Mammary epithelial cell (primary cell): ENCODE measurements at regions of chrX and their contacts with region 1.

Region 1: GRCh38 chrX:66200855-66201795 is 37.1 kb downstream of the HEPH start:
- DNase-seq: no peak
- H3K4me3 ChIP-seq: no peak overlapping the region
- H3K27ac ChIP-seq: no peak overlapping the region
- H3K4me1 ChIP-seq: no peaks in the 10 kb centered on the region
- H3K27me3 ChIP-seq: no peaks in the 10 kb centered on the region
- CTCF ChIP-seq: peak; percentile 4 to 39

Region 2: GRCh38 chrX:65948103-65948502 is 253.0 kb before region 1 on chrX:
- CTCF ChIA-PET with region 1: no interaction called
- dilution Hi-C with region 1: no loop called
- in situ Hi-C with region 1: no loop called
- intact Hi-C with region 1: no loop called
- DNase-seq: no peak
- H3K4me3 ChIP-seq: no peak overlapping the region
- H3K27ac ChIP-seq: no peak overlapping the region
- H3K4me1 ChIP-seq: no peaks in the 10 kb centered on the region
- H3K27me3 ChIP-seq: no peaks in the 10 kb centered on the region
- CTCF ChIP-seq: no peak

Region 3: GRCh38 chrX:66384722-66385121 is 183.6 kb after region 1 on chrX:
- CTCF ChIA-PET with region 1: no interaction called
- dilution Hi-C with region 1: no loop called
- in situ Hi-C with region 1: no loop called
- intact Hi-C with region 1: no loop called
- DNase-seq: no peak
- H3K4me3 ChIP-seq: no peak overlapping the region
- H3K27ac ChIP-seq: no peak overlapping the region
- H3K4me1 ChIP-seq: no peaks in the 10 kb centered on the region
- H3K27me3 ChIP-seq: no peaks in the 10 kb centered on the region
- CTCF ChIP-seq: no peak

Region 4: GRCh38 chrX:66408507-66408906 is 207.4 kb after region 1 on chrX:
- CTCF ChIA-PET with region 1: interaction called, 4 read pairs
- dilution Hi-C with region 1: no loop called
- in situ Hi-C with region 1: no loop called
- intact Hi-C with region 1: loop called (anchors 2 kb)
- DNase-seq: peak; percentile 12
- H3K4me3 ChIP-seq: no peak overlapping the region
- H3K27ac ChIP-seq: no peak overlapping the region
- H3K4me1 ChIP-seq: no peaks in the 10 kb centered on the region
- H3K27me3 ChIP-seq: no peaks in the 10 kb centered on the region
- CTCF ChIP-seq: peak in 1 of 2 donors; percentile 29

Region 5: DNA sequence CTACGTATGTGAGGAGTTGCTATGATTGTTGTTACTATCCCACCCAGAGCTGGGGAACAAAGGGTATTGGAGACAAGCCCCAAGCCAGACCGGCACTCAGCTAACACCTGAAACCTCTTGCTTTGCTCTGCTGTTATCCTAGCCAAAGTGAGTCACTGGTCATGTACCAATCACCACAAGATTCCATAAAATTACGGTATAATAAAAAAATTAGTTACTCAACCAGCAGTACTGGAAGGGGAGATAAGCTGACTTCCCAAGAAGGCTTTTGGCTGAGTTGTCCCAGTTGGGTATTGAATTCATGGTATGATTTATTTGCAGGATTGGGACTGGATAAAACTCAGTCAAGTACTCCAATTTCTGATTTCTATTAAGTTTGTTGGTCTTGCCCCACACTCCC is 432.4 kb after region 1 on chrX:
- CTCF ChIA-PET with region 1: no interaction called
- dilution Hi-C with region 1: no loop called
- in situ Hi-C with region 1: no loop called
- intact Hi-C with region 1: loop called (anchors 5 kb)
- DNase-seq: peak; percentile 60
- H3K4me3 ChIP-seq: peak overlapping the region in 1 of 3 experiments; percentile 16
- H3K27ac ChIP-seq: peak overlapping the region; percentile 79
- H3K4me1 ChIP-seq: peaks cover 36% of the 10 kb centered on the region
- H3K27me3 ChIP-seq: no peaks in the 10 kb centered on the region
- CTCF ChIP-seq: no peak